ENCODE measurements at regions of chr6 and their contacts with region 1.

Region 1: DNA sequence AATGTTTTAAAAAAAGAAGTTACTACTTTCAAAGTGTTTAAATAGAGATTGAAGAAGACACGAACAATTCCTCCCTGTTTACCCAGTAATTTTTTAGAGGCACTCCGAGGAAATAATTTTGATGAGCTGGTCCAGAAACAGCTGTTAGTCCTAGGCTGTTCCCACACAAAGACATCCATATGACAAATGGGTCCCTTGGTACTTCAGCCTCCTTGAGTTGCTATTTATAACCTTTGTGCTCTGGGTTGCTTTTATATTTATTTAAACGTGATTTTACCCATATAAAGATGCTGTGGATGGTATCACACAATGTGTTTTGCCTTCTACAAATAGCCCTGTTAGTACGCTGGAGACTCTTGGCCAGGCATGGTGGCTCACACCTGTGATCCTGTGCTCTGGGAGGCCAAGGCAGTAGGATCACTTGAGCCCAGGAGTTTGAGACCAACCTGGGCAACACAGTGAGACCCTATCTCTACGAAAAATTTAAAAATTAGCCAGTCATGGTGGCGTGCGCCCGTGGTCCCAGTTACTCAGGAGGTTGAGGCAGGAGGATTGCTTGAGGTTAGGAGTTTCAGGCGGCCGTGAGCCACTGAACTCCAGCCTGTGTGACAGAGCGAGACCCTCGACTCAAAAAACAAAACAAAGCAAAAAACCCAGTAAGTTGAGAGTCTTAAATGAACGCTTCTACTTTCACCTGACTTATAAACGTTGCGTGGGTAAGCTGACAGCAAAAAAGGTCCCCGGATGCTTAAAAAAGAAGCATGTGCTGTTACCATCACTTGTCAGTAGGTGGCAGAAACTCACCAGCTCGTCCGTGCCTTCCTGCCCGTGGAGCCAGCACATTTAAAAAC is 56.9 kb upstream of the ARMH2 start:
- DNase-seq: peak; percentile 79 to 83 (median 80)
- ATAC-seq: peak; percentile 94
- H3K4me3 ChIP-seq: no peak overlapping the region
- H3K27ac ChIP-seq: no peak overlapping the region
- H3K4me1 ChIP-seq: no peaks in the 10 kb centered on the region
- H3K27me3 ChIP-seq: peaks cover 13 to 24% of the 10 kb centered on the region in 2 experiments
- CTCF ChIP-seq: peak; percentile 84 to 93 (median 86)
- EP300 ChIP-seq: no peak
- POLR2A ChIP-seq: no peak
- RAD21 ChIP-seq: peak; percentile 89

Region 2: GRCh38 chr6:24827162-24827561 is 28.5 kb before region 1 on chr6:
- CTCF ChIA-PET with region 1: no interaction called
- POLR2A ChIA-PET with region 1: no interaction called
- in situ Hi-C with region 1: no loop called
- intact Hi-C with region 1: no loop called
- DNase-seq: no peak
- ATAC-seq: peak; percentile 59; the same call in 2 of the 3 replicates
- H3K4me3 ChIP-seq: no peak overlapping the region
- H3K27ac ChIP-seq: no peak overlapping the region
- H3K4me1 ChIP-seq: no peaks in the 10 kb centered on the region
- H3K27me3 ChIP-seq: peaks cover 14 to 24% of the 10 kb centered on the region in 2 experiments
- CTCF ChIP-seq: peak in 1 of 3 experiments; percentile 18; a peak in 1 of 6 replicates
- EP300 ChIP-seq: no peak
- POLR2A ChIP-seq: no peak
- RAD21 ChIP-seq: 0 out of 4 replicates have a peak, but pooled peaks of 1 of the 2 experiments have one; percentile 32

Region 3: DNA sequence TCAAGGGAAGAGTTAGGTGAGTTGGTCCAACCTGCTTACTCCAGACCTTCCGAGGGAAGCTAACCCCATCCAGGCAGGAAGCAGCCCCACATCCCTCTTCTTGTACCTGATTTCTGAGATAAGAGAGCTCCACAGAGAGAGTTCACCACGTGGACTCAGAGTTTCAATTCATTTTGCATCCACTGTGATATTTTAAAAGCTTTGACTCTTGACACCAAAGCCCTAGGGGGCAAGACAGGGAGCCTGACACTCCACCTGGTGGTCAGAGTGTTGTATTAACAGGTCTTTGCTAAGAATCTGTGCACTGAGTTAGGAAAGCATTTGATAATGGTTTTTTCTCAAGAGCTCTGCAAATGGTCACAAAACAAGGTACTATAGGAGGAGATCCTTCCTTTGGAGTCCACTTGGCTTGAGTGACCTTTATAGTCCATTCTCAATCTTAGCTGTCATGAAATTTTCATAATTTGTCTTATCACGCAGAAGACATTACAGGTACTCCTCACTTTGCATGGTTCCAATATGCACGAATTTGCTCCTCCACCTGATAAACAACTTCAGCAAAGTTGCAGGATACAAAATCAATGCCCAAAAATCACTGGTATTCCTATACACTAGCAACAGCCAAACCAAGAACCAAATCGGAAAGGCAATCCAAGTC is 136.3 kb after region 1 on chr6:
- CTCF ChIA-PET with region 1: interaction called, 5 read pairs
- POLR2A ChIA-PET with region 1: no interaction called
- in situ Hi-C with region 1: no loop called
- intact Hi-C with region 1: loop called (anchors 1 kb)
- DNase-seq: peak; percentile 58 to 67 (median 62)
- ATAC-seq: peak; percentile 95
- H3K4me3 ChIP-seq: no peak overlapping the region
- H3K27ac ChIP-seq: no peak overlapping the region
- H3K4me1 ChIP-seq: no peaks in the 10 kb centered on the region
- H3K27me3 ChIP-seq: no peaks in the 10 kb centered on the region
- CTCF ChIP-seq: peak; percentile 77 to 83 (median 78)
- EP300 ChIP-seq: no peak
- POLR2A ChIP-seq: no peak
- RAD21 ChIP-seq: peak; percentile 57 to 75

Region 4: GRCh38 chr6:25017932-25018567 is 162.4 kb after region 1 on chr6:
- CTCF ChIA-PET with region 1: interaction called, 6 read pairs
- POLR2A ChIA-PET with region 1: no interaction called
- in situ Hi-C with region 1: no loop called
- intact Hi-C with region 1: loop called (anchors 1 kb)
- DNase-seq: peak in 3 of 4 experiments; percentile 22 to 52 (median 26)
- ATAC-seq: peak; percentile 87
- H3K4me3 ChIP-seq: no peak overlapping the region
- H3K27ac ChIP-seq: no peak overlapping the region
- H3K4me1 ChIP-seq: no peaks in the 10 kb centered on the region
- H3K27me3 ChIP-seq: peaks cover 0 to 11% of the 10 kb centered on the region in 2 experiments; a peak in 2 of 5 replicates
- CTCF ChIP-seq: peak; percentile 64 to 67 (median 66)
- EP300 ChIP-seq: no peak
- POLR2A ChIP-seq: no peak
- RAD21 ChIP-seq: peak; percentile 79 to 84

Region 5: GRCh38 chr6:25330796-25331685 is 475.4 kb after region 1 on chr6:
- CTCF ChIA-PET with region 1: no interaction called
- POLR2A ChIA-PET with region 1: no interaction called
- in situ Hi-C with region 1: no loop called
- intact Hi-C with region 1: no loop called
- DNase-seq: no peak
- ATAC-seq: no peak
- H3K4me3 ChIP-seq: no peak overlapping the region
- H3K27ac ChIP-seq: no peak overlapping the region
- H3K4me1 ChIP-seq: no peaks in the 10 kb centered on the region
- H3K27me3 ChIP-seq: no peaks in the 10 kb centered on the region
- CTCF ChIP-seq: no peak
- EP300 ChIP-seq: no peak
- POLR2A ChIP-seq: no peak
- RAD21 ChIP-seq: no peak

Measured in K562 (cell line).